ENCODE measurements at regions of chr10 and their contacts with region 1.

Region 1: GRCh38 chr10:100438674-100439315 is 24.0 kb upstream of the WNT8B start:
- DNase-seq: no peak
- ATAC-seq: no peak
- H3K4me3 Mint-ChIP-seq: no peak overlapping the region
- H3K27ac Mint-ChIP-seq: no peak overlapping the region
- H3K4me1 Mint-ChIP-seq: peaks cover 3% of the 10 kb centered on the region
- H3K27me3 Mint-ChIP-seq: peaks cover 1% of the 10 kb centered on the region

Region 2: DNA sequence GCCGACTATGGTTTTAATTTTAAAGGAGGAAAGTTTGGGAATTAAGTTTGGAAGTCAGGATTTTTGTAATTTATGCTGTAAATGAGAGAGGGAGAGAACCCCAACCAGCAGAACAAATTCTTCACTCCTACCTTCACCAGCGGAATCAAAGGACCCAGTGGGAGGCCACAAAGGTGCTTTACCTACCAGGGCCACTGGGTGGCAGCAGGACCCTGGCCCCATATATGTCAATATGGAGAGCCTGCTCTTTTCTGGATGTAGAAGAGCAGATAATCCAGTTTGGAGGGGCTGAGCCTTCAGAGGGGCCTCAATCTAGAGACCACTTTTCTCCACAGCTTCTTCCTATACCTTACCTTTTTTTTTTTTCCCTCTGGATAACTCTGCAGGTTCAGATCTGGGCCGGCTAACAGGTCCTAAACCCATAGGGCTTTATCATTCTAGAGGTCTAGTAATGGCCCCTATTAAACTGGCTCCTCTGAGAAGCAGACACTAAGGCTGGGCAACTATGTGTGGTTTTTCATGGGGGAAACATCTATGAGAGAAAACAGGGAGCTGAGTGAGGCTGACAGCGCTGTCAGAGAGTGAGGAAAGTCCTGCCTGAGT is 100.3 kb before region 1 on chr10:
- CTCF ChIA-PET with region 1: interaction called, 236 read pairs
- POLR2A ChIA-PET with region 1: no interaction called
- intact Hi-C with region 1: loop called (anchors 1 kb)
- DNase-seq: peak; percentile 90
- ATAC-seq: peak; percentile 85
- H3K4me3 Mint-ChIP-seq: no peak overlapping the region
- H3K27ac Mint-ChIP-seq: no peak overlapping the region
- H3K4me1 Mint-ChIP-seq: no peaks in the 10 kb centered on the region
- H3K27me3 Mint-ChIP-seq: no peaks in the 10 kb centered on the region

Region 3: DNA sequence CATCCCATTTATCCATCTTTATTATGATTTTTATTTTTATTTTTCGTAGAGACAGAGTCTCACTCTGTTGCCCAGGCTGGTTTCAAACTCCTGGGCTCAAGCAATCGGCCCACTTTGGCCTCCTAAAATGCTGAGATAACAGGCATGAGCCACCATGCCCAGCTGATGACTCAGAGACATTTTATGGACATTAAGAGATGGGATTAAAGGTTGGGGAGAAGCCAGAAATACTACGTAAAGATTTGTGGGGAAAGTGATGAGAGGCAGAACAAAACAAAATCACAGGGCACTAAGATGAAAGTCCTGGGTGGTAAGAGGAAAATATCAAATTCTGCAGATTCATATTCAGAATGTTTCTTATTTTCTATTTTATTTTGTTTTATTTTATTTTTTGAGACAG is 31.6 kb after region 1 on chr10:
- CTCF ChIA-PET with region 1: interaction called, 10 read pairs
- POLR2A ChIA-PET with region 1: no interaction called
- intact Hi-C with region 1: no loop called
- DNase-seq: no peak
- ATAC-seq: no peak
- H3K4me3 Mint-ChIP-seq: no peak overlapping the region
- H3K27ac Mint-ChIP-seq: no peak overlapping the region
- H3K4me1 Mint-ChIP-seq: no peaks in the 10 kb centered on the region
- H3K27me3 Mint-ChIP-seq: peaks cover 2% of the 10 kb centered on the region

Measured in activated CD4-positive, alpha-beta T cell treated with anti-CD3 and anti-CD28 coated beads for 36 hours (primary cell).